Heart right ventricle (tissue), 16 donors: ENCODE measurements at regions of chr2 and their contacts with region 1.

Region 1: DNA sequence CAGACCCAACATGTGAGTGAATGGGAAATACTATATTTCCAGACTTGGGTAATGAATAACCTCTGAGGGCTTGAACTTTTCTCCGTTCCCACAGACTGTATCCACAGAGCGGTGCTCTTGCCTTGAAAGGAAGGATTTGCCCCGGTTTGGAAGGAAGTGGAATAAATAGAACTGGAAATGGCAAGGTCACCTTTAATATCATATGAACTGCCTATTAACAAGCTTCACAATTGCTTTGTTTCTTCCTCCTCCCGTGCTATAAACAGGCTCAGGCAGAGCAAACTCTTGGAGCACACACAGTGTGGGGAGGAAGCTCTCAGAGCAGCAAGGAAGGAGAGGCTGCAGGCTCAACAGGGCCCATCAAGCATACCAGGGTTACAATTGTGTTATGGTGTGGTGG is 28.5 kb upstream of the DARS1 start:
- DNase-seq: peak in 1 of 2 donors; percentile 30
- ATAC-seq: peak; percentile 65 to 96 (median 80)
- H3K4me3 ChIP-seq: no peak overlapping the region
- H3K27ac ChIP-seq: peak overlapping the region in 8 of 10 donors; percentile 1 to 78 (median 60)
- H3K4me1 ChIP-seq: peaks cover 5 to 62% (median 36%) of the 10 kb centered on the region in 9 donors
- H3K27me3 ChIP-seq: no peaks in the 10 kb centered on the region
- CTCF ChIP-seq: peak in 5 of 9 donors; percentile 11 to 53 (median 22)

Region 2: GRCh38 chr2:134482131-134482723 is 1531.7 kb before region 1 on chr2:
- intact Hi-C with region 1: loop called in 1 of 10 experiments (anchors 5 kb)
- DNase-seq: no peak
- ATAC-seq: no peak
- H3K4me3 ChIP-seq: no peak overlapping the region
- H3K27ac ChIP-seq: no peak overlapping the region
- H3K4me1 ChIP-seq: no peaks in the 10 kb centered on the region
- H3K27me3 ChIP-seq: no peaks in the 10 kb centered on the region
- CTCF ChIP-seq: no peak